Body of pancreas (tissue), 4 donors: ENCODE measurements at regions of chr1 and their contacts with region 1.

Region 1: GRCh38 chr1:15741183-15741850 is 982 bp upstream of the TMEM82 start:
- DNase-seq: peak; percentile 87 to 93 (median 90)
- ATAC-seq: peak; percentile 89
- H3K4me3 ChIP-seq: no peak overlapping the region
- H3K27ac ChIP-seq: no peak overlapping the region
- H3K4me1 ChIP-seq: peaks cover 40% of the 10 kb centered on the region
- H3K27me3 ChIP-seq: no peaks in the 10 kb centered on the region
- CTCF ChIP-seq: peak; percentile 89 to 96 (median 93)
- POLR2A ChIP-seq: no peak

Region 2: GRCh38 chr1:15283526-15283925 is 457.8 kb before region 1 on chr1:
- intact Hi-C with region 1: no loop called
- DNase-seq: peak in 2 of 4 donors; percentile 46 to 53
- ATAC-seq: no peak
- H3K4me3 ChIP-seq: no peak overlapping the region
- H3K27ac ChIP-seq: peak overlapping the region in 3 of 4 donors; percentile 85 to 92 (median 90)
- H3K4me1 ChIP-seq: peaks cover 49% of the 10 kb centered on the region
- H3K27me3 ChIP-seq: no peaks in the 10 kb centered on the region
- CTCF ChIP-seq: peak in 3 of 7 experiments; percentile 14 to 20 (median 15)
- POLR2A ChIP-seq: no peak

Region 3: GRCh38 chr1:15598436-15598835 is 142.9 kb before region 1 on chr1:
- intact Hi-C with region 1: loop called (anchors 10 kb)
- DNase-seq: no peak
- ATAC-seq: no peak
- H3K4me3 ChIP-seq: no peak overlapping the region
- H3K27ac ChIP-seq: no peak overlapping the region
- H3K4me1 ChIP-seq: peaks cover 11% of the 10 kb centered on the region
- H3K27me3 ChIP-seq: no peaks in the 10 kb centered on the region
- CTCF ChIP-seq: no peak
- POLR2A ChIP-seq: no peak